Vagina (tissue), 2 donors: ENCODE measurements at regions of chr17 and their contacts with region 1.

Region 1: GRCh38 chr17:12877953-12878669 is 88.8 kb downstream of the ARHGAP44 start:
- DNase-seq: no peak
- H3K4me3 ChIP-seq: no peak overlapping the region
- H3K27ac ChIP-seq: no peak overlapping the region
- H3K4me1 ChIP-seq: no peaks in the 10 kb centered on the region
- H3K27me3 ChIP-seq: no peaks in the 10 kb centered on the region
- CTCF ChIP-seq: no peak
- POLR2A ChIP-seq: no peak

Region 2: DNA sequence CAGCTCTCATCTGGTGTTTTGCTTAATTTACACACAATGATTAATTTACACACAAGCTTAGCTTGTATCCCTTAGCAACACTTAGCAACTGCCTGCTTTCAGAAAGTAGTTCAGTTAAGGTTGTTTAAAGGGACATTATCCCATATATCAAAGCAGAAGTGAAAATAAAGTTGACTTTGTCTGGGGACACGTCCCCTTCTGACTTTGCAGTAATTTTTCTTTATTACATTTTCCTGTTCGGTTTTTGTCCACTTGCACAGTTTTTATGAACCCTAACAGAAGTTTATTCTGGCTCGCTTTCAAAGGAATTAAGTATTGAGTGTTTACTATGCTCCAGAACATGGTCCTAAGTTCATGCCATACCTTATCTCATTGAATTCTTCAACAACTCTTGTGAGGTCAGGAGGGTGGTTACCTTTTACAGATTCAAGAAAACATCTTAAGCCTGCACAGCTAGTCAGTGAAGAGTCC is 47.3 kb before region 1 on chr17:
- intact Hi-C with region 1: loop called (anchors 2 kb)
- DNase-seq: no peak
- H3K4me3 ChIP-seq: no peak overlapping the region
- H3K27ac ChIP-seq: no peak overlapping the region
- H3K4me1 ChIP-seq: no peaks in the 10 kb centered on the region
- H3K27me3 ChIP-seq: no peaks in the 10 kb centered on the region
- CTCF ChIP-seq: no peak
- POLR2A ChIP-seq: no peak